Dendritic cell treated with granulocyte-macrophage colony-stimulating factor and Interleukin-4, amounts not matched to agents 40 ng/mL and 50 ng/mL, for 4 days (primary cell): ENCODE measurements at regions of chr1 and their contacts with region 1.

Region 1: GRCh38 chr1:189349607-189350006 is 1128.1 kb downstream of the BRINP3 start:
- H3K4me3 Mint-ChIP-seq: no peak overlapping the region
- H3K27ac Mint-ChIP-seq: no peak overlapping the region
- H3K4me1 Mint-ChIP-seq: no peaks in the 10 kb centered on the region
- H3K27me3 Mint-ChIP-seq: no peaks in the 10 kb centered on the region

Region 2: DNA sequence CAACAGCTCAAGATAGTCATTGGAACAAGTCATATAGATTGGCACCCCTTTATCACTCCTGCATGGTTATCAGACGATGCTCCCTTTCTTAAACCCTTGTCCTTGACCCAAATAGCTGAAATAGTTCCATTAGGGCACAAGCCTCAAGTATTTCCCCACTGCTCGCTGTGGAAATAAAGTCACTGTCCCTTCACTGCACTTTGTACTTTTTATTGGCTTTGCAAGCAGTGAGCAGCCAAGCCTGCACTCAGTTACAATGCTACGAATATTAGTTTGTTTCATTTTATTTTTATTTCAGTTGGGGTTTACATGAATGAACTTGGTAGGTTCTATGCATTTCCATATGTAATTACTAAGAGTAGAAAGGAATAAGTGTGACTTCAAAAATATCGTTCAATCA is 48.4 kb before region 1 on chr1:
- intact Hi-C with region 1: loop called (anchors 10 kb)
- H3K4me3 Mint-ChIP-seq: no peak overlapping the region
- H3K27ac Mint-ChIP-seq: no peak overlapping the region
- H3K4me1 Mint-ChIP-seq: no peaks in the 10 kb centered on the region
- H3K27me3 Mint-ChIP-seq: no peaks in the 10 kb centered on the region

Region 3: GRCh38 chr1:189637041-189637440 is 287.4 kb after region 1 on chr1:
- intact Hi-C with region 1: no loop called
- H3K4me3 Mint-ChIP-seq: no peak overlapping the region
- H3K27ac Mint-ChIP-seq: no peak overlapping the region
- H3K4me1 Mint-ChIP-seq: no peaks in the 10 kb centered on the region
- H3K27me3 Mint-ChIP-seq: no peaks in the 10 kb centered on the region